ENCODE measurements at regions of chr5 and their contacts with region 1.

Region 1: GRCh38 chr5:134769206-134769605 is 10.6 kb downstream of the DDX46 start:
- DNase-seq: no peak
- ATAC-seq: no peak
- H3K4me3 ChIP-seq: no peak overlapping the region
- H3K27ac ChIP-seq: no peak overlapping the region
- H3K4me1 ChIP-seq: no peaks in the 10 kb centered on the region
- H3K27me3 ChIP-seq: no peaks in the 10 kb centered on the region
- CTCF ChIP-seq: no peak

Region 2: GRCh38 chr5:134784241-134784920 is 15.2 kb after region 1 on chr5:
- CTCF ChIA-PET with region 1: no interaction called
- POLR2A ChIA-PET with region 1: interaction called, 10 read pairs
- in situ Hi-C with region 1: no loop called
- intact Hi-C with region 1: no loop called
- DNase-seq: no peak
- ATAC-seq: no peak
- H3K4me3 ChIP-seq: no peak overlapping the region
- H3K27ac ChIP-seq: no peak overlapping the region
- H3K4me1 ChIP-seq: no peaks in the 10 kb centered on the region
- H3K27me3 ChIP-seq: no peaks in the 10 kb centered on the region
- CTCF ChIP-seq: no peak

Region 3: DNA sequence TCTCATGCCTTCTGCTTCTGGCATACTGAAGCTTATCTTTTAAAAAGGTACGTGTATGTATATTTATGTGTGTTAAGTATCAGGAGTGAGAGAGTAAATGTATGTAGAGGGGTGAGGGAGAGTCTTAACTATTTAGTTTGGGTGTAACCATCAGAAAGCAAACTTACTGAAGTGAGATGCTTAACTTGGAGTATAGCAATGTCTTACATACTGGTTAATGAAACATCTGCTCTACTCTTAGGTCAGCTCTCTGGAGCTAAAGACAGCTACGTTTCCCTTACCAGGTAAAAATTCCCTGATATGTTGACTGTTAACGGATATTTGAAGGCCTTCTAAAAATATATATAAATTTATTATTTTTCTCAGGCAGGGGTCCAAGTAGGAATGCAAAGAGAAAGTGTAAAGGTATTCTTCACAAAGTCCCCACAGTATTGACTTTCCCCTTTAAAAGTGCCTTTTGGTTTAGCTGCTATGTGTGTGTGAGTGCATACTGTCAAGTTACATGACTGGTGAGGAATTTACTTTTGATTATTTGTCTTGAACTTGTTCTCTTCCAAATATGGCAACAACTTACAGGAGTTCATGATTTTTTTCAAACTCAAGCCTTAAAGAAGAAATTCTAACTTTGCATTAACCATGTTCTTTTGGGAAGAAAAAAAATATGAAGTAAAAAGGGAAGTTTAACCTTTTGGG is 64.3 kb after region 1 on chr5:
- CTCF ChIA-PET with region 1: no interaction called
- POLR2A ChIA-PET with region 1: interaction called, 5 read pairs
- in situ Hi-C with region 1: loop called (anchors 5 kb)
- intact Hi-C with region 1: no loop called
- DNase-seq: no peak
- ATAC-seq: no peak
- H3K4me3 ChIP-seq: no peak overlapping the region
- H3K27ac ChIP-seq: no peak overlapping the region
- H3K4me1 ChIP-seq: no peaks in the 10 kb centered on the region
- H3K27me3 ChIP-seq: no peaks in the 10 kb centered on the region
- CTCF ChIP-seq: no peak

Measured in Panc1 (cell line).